Activated B cell treated with CpG ODN at 0.5 μM for 24 hours (primary cell): ENCODE measurements at regions of chr6 and their contacts with region 1.

Region 1: DNA sequence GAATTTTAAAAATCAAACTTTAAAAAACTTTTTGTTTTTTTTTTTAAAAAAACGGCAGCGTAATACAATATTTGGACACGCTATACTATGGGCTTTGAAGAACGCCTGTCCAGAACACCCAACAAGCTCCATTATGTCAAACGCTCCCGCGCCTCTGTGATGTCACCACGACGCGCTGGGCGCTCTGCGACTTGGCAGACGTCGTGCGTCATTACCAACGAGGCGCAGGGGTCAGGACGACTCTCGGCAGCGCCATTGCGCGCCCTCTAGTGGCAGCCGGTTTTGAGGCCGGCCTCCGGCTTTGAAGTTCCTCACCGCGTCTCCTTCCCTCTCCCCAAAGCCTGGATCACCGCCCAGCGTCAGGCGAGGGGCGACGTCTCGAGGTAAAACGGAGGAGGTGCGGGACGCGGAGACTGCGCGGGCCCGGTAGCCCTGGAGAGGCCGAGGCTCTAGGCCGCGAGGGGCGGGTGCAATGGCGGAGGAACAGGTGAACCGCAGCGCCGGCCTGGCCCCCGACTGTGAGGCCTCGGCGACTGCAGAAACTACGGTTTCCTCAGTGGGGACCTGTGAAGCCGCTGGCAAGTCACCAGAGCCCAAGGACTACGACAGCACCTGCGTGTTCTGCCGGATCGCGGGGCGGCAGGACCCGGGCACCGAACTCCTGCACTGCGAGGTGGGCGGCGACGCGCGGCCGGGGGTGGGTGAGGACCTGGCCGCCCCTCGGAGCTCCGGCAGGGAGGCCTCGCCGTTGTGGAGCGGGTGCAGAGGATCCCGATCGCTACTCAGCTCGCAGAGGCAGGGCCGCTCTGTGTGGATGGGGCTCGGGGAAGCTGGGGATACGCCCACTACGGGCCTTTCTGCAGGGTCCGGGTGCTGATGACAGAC is at the start of gene HINT3:
- DNase-seq: peak; percentile 95
- ATAC-seq: peak; percentile 85
- H3K4me3 Mint-ChIP-seq: no peak within 1 kb of the TSS
- H3K27ac Mint-ChIP-seq: peak within 1 kb of the TSS; percentile 62
- H3K4me1 Mint-ChIP-seq: peaks cover 4% of the 10 kb centered on the region
- H3K27me3 Mint-ChIP-seq: peaks cover 3% of the 10 kb centered on the region
- CTCF ChIP-seq: peak; percentile 92
- total RNA-seq, gene HINT3: 10.6 and 11.1 TPM in 2 replicates

Region 2: DNA sequence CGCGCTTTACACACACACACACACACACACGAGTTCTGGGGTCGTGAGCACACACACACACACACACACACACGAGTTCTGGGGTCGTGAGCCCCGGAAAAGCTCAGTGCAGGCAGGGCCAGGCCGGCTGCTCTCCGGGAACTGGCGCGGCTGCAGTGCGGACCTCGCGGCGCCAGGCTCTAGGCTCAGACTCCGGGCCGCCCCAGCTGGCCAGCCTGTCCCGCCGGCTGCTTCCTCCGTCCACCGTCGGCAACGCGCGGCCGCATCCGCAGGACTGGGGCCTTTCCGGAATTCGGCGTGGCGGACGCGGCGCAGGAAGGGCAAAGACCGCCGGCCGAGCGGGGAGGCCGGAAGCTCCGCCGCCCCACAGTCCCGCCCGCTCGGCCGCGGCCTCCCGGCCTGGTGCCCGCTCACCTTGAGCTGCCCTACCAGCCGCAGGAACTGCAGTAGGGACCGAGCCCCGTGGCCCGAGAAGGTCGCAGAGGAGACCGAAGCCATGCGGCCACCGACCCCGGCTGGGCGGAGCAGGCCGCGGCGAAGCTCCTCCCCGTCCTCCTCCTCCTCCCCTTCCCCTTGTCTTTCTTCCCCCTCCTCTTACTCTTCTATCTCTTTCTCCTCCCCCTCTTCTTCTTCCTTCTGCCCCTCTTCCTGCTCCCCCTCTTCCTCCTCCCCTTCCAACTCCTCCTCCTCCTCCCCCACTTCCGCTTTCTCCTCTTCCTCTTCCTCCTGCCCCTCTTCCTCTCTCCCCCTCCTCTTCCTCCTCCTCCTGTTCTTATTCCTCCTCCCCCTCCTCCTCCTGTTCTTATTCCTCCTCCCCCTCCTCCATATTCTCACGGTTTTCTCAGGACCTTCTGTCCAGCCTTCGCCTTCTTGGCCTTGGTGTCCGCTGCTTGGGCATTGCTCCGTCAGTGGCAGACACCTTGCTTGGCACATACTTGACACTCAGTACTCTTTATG is 655.0 kb before region 1 on chr6 and contains the start of gene HDDC2:
- CTCF ChIA-PET with region 1: interaction called, 5 read pairs
- POLR2A ChIA-PET with region 1: interaction called, 3 read pairs
- intact Hi-C with region 1: loop called (anchors 2 kb)
- DNase-seq: peak; percentile 53
- ATAC-seq: peak; percentile 78
- H3K4me3 Mint-ChIP-seq: peak within 1 kb of the TSS; percentile 89
- H3K27ac Mint-ChIP-seq: peak within 1 kb of the TSS; percentile 78
- H3K4me1 Mint-ChIP-seq: peaks cover 38% of the 10 kb centered on the region
- H3K27me3 Mint-ChIP-seq: peaks cover 14% of the 10 kb centered on the region
- CTCF ChIP-seq: no peak
- total RNA-seq, gene HDDC2: 53.1 and 55.8 TPM in 2 replicates

Region 3: GRCh38 chr6:125749173-125749864 is 207.4 kb before region 1 on chr6 and contains the start of gene HEY2:
- CTCF ChIA-PET with region 1: no interaction called
- POLR2A ChIA-PET with region 1: no interaction called
- intact Hi-C with region 1: loop called (anchors 1 kb)
- DNase-seq: peak; percentile 92
- ATAC-seq: peak; percentile 91
- H3K4me3 Mint-ChIP-seq: peak within 1 kb of the TSS; percentile 81
- H3K27ac Mint-ChIP-seq: peak within 1 kb of the TSS; percentile 61
- H3K4me1 Mint-ChIP-seq: peaks cover 40% of the 10 kb centered on the region
- H3K27me3 Mint-ChIP-seq: peaks cover 46% of the 10 kb centered on the region
- CTCF ChIP-seq: no peak
- total RNA-seq, gene HEY2: not detected in 2 replicates

Region 4: GRCh38 chr6:125790358-125791150 is 166.2 kb before region 1 on chr6 and contains the start of gene NCOA7:
- CTCF ChIA-PET with region 1: interaction called, 57 read pairs
- POLR2A ChIA-PET with region 1: interaction called, 52 read pairs
- intact Hi-C with region 1: loop called (anchors 1 kb)
- DNase-seq: peak; percentile 74
- ATAC-seq: peak; percentile 79
- H3K4me3 Mint-ChIP-seq: peak within 1 kb of the TSS; percentile 89
- H3K27ac Mint-ChIP-seq: peak within 1 kb of the TSS; percentile 95
- H3K4me1 Mint-ChIP-seq: peaks cover 50% of the 10 kb centered on the region
- H3K27me3 Mint-ChIP-seq: no peaks in the 10 kb centered on the region
- CTCF ChIP-seq: no peak
- total RNA-seq, gene NCOA7: 29.2 and 33.4 TPM in 2 replicates

Region 5: GRCh38 chr6:125888989-125889656 is 67.6 kb before region 1 on chr6:
- CTCF ChIA-PET with region 1: interaction called, 6 read pairs
- POLR2A ChIA-PET with region 1: no interaction called
- intact Hi-C with region 1: loop called (anchors 1 kb)
- DNase-seq: no peak
- ATAC-seq: no peak
- H3K4me3 Mint-ChIP-seq: no peak overlapping the region
- H3K27ac Mint-ChIP-seq: no peak overlapping the region
- H3K4me1 Mint-ChIP-seq: no peaks in the 10 kb centered on the region
- H3K27me3 Mint-ChIP-seq: no peaks in the 10 kb centered on the region
- CTCF ChIP-seq: no peak

Region 6: DNA sequence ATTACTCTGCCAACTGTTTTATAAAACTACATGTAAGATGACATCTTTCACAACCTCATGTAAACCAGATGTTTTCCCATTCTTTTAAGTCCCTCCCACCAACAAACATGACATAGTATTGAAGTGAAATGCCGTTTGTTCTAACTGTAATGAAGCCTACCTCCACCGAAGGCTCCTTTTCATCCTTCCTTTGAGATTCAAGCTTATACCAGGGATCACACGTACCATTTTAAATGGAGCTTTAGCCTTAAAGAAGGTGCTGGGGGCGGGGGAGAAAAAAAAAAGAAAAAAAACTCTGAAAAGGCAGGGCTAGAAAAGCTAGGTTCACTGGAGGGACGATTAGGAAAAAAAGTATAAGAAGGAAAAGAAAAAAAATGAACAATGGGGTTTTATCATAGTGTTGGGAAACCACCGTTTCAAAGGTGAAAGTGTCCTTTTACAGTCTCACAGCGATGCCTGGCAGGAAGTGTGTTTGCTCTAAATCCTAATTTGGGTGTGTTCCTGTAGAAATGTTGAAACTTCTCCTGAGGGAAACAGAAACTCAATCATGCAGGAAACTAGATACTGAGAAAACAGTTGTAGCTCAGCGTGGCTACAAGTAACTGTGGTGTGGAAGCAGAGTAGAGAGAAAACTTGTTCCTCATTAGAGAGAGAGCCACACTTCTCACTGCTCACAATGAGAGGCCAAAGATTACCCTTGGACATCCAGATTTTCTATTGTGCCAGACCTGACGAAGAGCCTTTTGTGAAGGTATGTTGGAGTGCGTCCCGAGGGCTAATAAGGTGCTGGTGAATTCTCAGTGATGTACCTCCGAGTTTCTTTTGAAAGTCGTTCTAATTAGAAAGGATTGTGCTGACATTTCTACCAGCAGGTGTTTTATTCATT is 37.8 kb before region 1 on chr6:
- CTCF ChIA-PET with region 1: interaction called, 27 read pairs
- POLR2A ChIA-PET with region 1: interaction called, 12 read pairs
- intact Hi-C with region 1: loop called (anchors 1 kb)
- DNase-seq: no peak
- ATAC-seq: peak; percentile 90
- H3K4me3 Mint-ChIP-seq: peak overlapping the region; percentile 80
- H3K27ac Mint-ChIP-seq: peak overlapping the region; percentile 90
- H3K4me1 Mint-ChIP-seq: peaks cover 28% of the 10 kb centered on the region
- H3K27me3 Mint-ChIP-seq: no peaks in the 10 kb centered on the region
- CTCF ChIP-seq: no peak

Region 7: GRCh38 chr6:125986300-125987025 is 29.7 kb after region 1 on chr6 and contains the start of gene TRMT11:
- CTCF ChIA-PET with region 1: interaction called, 17 read pairs
- POLR2A ChIA-PET with region 1: interaction called, 19 read pairs
- intact Hi-C with region 1: loop called (anchors 1 kb)
- DNase-seq: peak; percentile 70
- ATAC-seq: peak; percentile 95
- H3K4me3 Mint-ChIP-seq: peak within 1 kb of the TSS; percentile 25
- H3K27ac Mint-ChIP-seq: no peak within 1 kb of the TSS
- H3K4me1 Mint-ChIP-seq: peaks cover 9% of the 10 kb centered on the region
- H3K27me3 Mint-ChIP-seq: no peaks in the 10 kb centered on the region
- CTCF ChIP-seq: no peak
- total RNA-seq, gene TRMT11: 24.6 and 33.4 TPM in 2 replicates